Activated T-helper 1 cell treated with anti-CD3 and anti-CD28 coated beads, Interleukin-12 subunit alpha, Interleukin-12 subunit beta, Interleukin-2, Interleukin-4 antibody, amounts not matched to agents 30 ng/mL and 10 ng/mL and 1 ng/mL, durations not matched to agents 14 hours and 24 hours and 36 hours (primary cell): ENCODE measurements at regions of chr7 and their contacts with region 1.

Region 1: DNA sequence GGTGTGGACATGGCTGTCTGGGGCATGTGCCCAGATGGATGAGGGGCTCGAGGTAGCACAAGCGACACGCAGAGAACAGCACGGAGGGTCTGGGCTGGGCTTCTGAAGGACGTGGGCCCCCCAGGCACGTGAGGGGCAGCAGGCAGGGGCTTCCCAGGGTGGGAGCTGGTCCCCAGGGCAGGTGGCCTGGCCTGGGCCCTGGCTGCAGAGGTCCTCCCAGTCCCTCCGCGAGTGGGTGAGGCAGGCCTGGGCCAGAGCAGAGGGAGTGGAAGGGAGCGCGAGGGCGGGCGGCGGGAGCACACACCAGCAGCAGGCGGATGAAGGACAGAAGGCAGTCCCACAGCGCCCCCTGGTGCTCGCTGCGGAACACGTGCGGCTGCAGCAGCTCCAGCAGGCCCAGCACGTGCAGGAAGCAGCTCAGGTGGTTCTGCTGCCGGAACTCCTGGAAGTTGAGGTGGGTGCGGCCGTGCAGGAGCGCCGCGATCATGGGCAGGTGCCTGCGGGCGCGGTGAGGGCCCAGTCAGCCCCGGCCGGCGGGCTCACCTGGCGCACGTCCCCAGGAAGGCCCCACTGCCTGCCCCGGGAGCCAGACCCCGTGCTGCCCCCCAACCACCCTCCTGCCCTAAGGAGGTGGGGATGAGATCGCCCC is 14.7 kb upstream of the MICALL2 start:
- DNase-seq: peak; percentile 71
- H3K4me3 Mint-ChIP-seq: no peak overlapping the region
- H3K27ac Mint-ChIP-seq: no peak overlapping the region
- H3K4me1 Mint-ChIP-seq: no peaks in the 10 kb centered on the region
- H3K27me3 Mint-ChIP-seq: no peaks in the 10 kb centered on the region

Region 2: GRCh38 chr7:756911-757560 is 717.0 kb before region 1 on chr7:
- intact Hi-C with region 1: no loop called
- DNase-seq: no peak
- H3K4me3 Mint-ChIP-seq: no peak overlapping the region
- H3K27ac Mint-ChIP-seq: no peak overlapping the region
- H3K4me1 Mint-ChIP-seq: no peaks in the 10 kb centered on the region
- H3K27me3 Mint-ChIP-seq: no peaks in the 10 kb centered on the region

Region 3: DNA sequence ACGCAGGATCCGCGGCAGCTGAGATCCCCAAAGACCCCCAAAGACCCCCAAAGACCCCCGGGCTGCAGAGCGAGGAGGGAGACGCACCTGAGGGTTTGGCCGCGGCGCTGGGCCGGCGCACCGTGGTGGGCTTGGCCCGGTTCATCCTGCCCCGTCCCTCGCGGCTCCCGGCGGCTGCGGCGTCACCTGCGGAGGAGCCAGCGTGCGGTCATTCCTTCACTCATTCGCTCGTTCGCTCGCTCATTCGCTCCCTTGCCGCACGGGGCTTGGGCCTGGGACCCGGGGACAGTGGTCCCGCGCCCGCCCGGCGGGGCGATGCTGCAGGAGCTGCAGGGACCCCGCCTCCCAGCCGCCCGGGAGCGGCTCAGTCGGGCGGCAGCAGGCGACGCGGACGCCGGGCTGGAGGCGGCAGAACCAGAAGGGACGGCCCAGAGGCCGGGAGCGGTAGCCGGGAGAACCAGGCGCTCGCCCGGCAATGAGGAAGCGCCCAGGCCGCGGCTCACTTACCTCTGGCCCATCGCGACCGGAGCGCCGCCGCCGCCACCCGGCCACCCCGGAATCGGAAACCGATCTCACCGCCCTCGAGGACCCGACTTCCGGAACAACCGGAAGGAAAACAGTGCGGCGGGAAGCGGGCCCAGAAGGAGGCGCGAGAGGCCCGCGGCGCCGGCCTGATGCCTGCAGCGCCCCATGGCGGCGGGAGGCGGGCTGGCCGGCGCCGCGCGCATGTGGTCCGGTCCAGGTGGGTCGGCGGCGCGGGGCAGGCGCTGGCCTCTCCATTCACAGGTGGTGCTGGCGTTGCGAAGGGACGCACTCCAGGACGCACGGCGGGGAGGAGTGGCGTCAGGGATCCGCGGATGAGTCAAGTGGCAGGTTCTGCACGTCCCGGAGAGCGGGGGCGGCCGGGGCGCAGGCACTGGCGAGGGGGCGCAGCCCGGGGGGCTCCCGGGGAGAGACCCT is 30.1 kb after region 1 on chr7 and contains the start of gene INTS1:
- intact Hi-C with region 1: loop called (anchors 1 kb)
- DNase-seq: peak; percentile 90
- H3K4me3 Mint-ChIP-seq: peak within 1 kb of the TSS; percentile 89
- H3K27ac Mint-ChIP-seq: peak within 1 kb of the TSS; percentile 85
- H3K4me1 Mint-ChIP-seq: peaks cover 31% of the 10 kb centered on the region
- H3K27me3 Mint-ChIP-seq: no peaks in the 10 kb centered on the region
- total RNA-seq, gene INTS1: 94.3 and 97.9 TPM in 2 replicates

Region 4: DNA sequence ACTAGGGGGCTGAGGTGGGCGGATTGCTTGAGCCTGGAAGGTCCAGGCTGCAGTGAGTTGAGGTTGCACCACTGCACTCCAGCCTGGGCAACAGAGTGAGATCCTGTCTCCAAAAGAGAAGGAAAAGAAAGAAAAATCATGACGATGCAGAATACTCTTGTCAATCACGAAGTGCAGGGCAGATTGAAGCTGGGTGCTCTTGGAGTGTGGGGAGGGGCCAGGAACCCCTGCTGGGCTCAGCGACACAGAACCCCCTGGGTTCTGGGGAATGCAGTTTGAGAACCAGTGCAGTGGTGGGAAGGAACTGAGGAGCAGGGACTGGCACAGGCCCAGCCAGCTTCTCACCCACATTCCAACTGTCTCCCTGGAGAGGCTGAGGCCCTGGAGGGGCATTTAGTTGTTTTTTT is 41.0 kb after region 1 on chr7:
- intact Hi-C with region 1: no loop called
- DNase-seq: no peak
- H3K4me3 Mint-ChIP-seq: no peak overlapping the region
- H3K27ac Mint-ChIP-seq: no peak overlapping the region
- H3K4me1 Mint-ChIP-seq: peaks cover 7% of the 10 kb centered on the region
- H3K27me3 Mint-ChIP-seq: no peaks in the 10 kb centered on the region